Activated naive CD4-positive, alpha-beta T cell treated with anti-CD3 and anti-CD28 coated beads for 36 hours (primary cell): ENCODE measurements at regions of chr16 and their contacts with region 1.

Region 1: DNA sequence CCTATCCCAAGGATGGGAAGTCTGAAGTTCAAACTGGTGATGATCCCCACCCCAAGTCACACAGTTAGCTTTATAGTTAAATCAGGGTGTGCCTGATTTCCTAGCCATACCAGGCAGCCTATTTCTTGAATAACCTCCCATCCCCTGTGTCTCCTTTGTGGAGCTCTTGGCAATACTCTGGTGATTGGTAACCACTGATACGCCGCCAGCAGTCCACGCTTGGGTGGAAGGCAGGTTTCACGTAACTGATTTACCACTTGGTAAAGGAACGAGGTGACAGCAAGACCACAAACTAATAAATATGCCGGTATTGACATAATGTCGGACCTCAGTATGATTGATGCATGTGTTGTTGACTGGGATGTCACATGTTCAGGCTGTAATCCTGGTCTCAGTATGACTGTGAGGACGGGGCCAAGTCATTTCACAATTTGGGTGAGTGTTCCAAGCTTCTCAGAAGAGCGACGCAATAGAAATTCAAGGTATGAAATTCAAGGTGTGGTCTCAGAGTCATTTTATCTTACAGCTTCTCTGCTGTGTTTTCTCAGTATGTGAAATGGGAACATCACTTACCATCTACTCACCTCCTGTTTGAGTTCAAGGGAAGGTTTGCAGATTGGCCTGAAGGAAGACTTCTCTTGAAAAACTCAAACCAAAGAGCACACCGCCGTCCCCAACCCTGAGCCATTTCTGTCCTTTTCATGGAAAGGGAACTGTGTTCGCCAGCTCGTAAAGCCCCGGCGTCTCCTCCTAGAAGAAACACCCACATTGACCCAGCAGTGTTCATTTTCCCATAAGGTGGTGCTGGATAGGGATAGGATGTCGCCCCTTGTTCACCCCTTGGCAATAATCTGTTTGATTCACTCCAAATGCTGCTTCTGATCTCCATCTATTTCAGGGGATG is 678.9 kb downstream of the WWOX start:
- DNase-seq: peak; percentile 67
- H3K4me3 Mint-ChIP-seq: no peak overlapping the region
- H3K27ac Mint-ChIP-seq: peak overlapping the region; percentile 89
- H3K4me1 Mint-ChIP-seq: peaks cover 20% of the 10 kb centered on the region
- H3K27me3 Mint-ChIP-seq: no peaks in the 10 kb centered on the region

Region 2: GRCh38 chr16:78116946-78117345 is 661.4 kb before region 1 on chr16:
- CTCF ChIA-PET with region 1: no interaction called
- intact Hi-C with region 1: no loop called
- DNase-seq: no peak
- H3K4me3 Mint-ChIP-seq: no peak overlapping the region
- H3K27ac Mint-ChIP-seq: no peak overlapping the region
- H3K4me1 Mint-ChIP-seq: no peaks in the 10 kb centered on the region
- H3K27me3 Mint-ChIP-seq: no peaks in the 10 kb centered on the region

Region 3: GRCh38 chr16:78742501-78743283 is 35.7 kb before region 1 on chr16:
- CTCF ChIA-PET with region 1: no interaction called
- intact Hi-C with region 1: loop called (anchors 1 kb)
- DNase-seq: peak; percentile 86
- H3K4me3 Mint-ChIP-seq: peak overlapping the region; percentile 66
- H3K27ac Mint-ChIP-seq: peak overlapping the region; percentile 42
- H3K4me1 Mint-ChIP-seq: peaks cover 22% of the 10 kb centered on the region
- H3K27me3 Mint-ChIP-seq: no peaks in the 10 kb centered on the region

Region 4: GRCh38 chr16:78794581-78795250 is 16.4 kb after region 1 on chr16:
- CTCF ChIA-PET with region 1: no interaction called
- intact Hi-C with region 1: loop called (anchors 1 kb)
- DNase-seq: no peak
- H3K4me3 Mint-ChIP-seq: no peak overlapping the region
- H3K27ac Mint-ChIP-seq: no peak overlapping the region
- H3K4me1 Mint-ChIP-seq: peaks cover 5% of the 10 kb centered on the region
- H3K27me3 Mint-ChIP-seq: no peaks in the 10 kb centered on the region

Region 5: DNA sequence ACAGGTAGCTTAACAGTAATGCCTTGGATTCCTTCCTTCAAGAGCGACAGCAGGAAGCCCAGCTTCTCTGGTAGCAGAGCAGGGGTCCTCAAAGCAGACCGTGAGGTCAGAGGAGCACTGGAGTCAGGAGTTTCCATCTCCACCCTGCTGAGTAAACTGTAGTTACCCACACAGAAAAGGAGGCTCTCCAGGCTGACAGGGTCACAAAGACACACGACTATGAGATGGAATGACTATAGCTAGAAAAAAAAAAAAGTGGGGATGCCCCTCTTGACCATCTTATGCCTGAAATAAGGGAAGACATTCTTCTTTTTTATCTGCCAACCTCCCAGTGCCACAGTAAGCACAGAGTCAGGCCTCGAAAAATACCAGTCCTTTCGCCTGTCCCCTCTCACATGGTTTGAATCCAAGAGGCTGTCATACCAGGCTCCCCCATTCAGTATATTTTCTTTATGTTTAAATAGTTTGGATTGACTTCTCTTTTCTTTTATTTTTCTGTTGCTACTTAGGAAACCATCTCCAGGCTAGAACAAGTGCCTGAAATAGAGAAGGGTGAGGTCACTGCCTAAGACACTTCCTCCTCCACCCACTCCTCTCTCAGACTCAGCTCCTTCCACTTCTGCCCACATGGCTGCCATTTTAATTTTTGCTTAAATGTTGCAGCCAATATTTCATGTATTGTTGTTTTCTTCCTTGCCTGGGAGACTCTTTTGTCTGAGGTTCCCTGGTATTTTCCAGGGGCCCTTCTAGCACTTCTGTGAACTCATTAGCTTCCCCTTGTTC is 114.8 kb after region 1 on chr16:
- CTCF ChIA-PET with region 1: no interaction called
- intact Hi-C with region 1: loop called (anchors 1 kb)
- DNase-seq: peak; percentile 7
- H3K4me3 Mint-ChIP-seq: no peak overlapping the region
- H3K27ac Mint-ChIP-seq: no peak overlapping the region
- H3K4me1 Mint-ChIP-seq: peaks cover 18% of the 10 kb centered on the region
- H3K27me3 Mint-ChIP-seq: no peaks in the 10 kb centered on the region

Region 6: GRCh38 chr16:78900044-78900811 is 121.9 kb after region 1 on chr16:
- CTCF ChIA-PET with region 1: no interaction called
- intact Hi-C with region 1: loop called (anchors 1 kb)
- DNase-seq: no peak
- H3K4me3 Mint-ChIP-seq: no peak overlapping the region
- H3K27ac Mint-ChIP-seq: peak overlapping the region; percentile 24
- H3K4me1 Mint-ChIP-seq: peaks cover 18% of the 10 kb centered on the region
- H3K27me3 Mint-ChIP-seq: no peaks in the 10 kb centered on the region

Region 7: GRCh38 chr16:78962457-78962929 is 184.1 kb after region 1 on chr16:
- CTCF ChIA-PET with region 1: no interaction called
- intact Hi-C with region 1: loop called (anchors 5 kb)
- DNase-seq: no peak
- H3K4me3 Mint-ChIP-seq: no peak overlapping the region
- H3K27ac Mint-ChIP-seq: no peak overlapping the region
- H3K4me1 Mint-ChIP-seq: no peaks in the 10 kb centered on the region
- H3K27me3 Mint-ChIP-seq: no peaks in the 10 kb centered on the region

Region 8: GRCh38 chr16:79076047-79076767 is 297.9 kb after region 1 on chr16:
- CTCF ChIA-PET with region 1: no interaction called
- intact Hi-C with region 1: loop called (anchors 1 kb)
- DNase-seq: peak; percentile 33
- H3K4me3 Mint-ChIP-seq: peak overlapping the region; percentile 25
- H3K27ac Mint-ChIP-seq: peak overlapping the region; percentile 83
- H3K4me1 Mint-ChIP-seq: peaks cover 43% of the 10 kb centered on the region
- H3K27me3 Mint-ChIP-seq: peaks cover 7% of the 10 kb centered on the region